Mucosa of descending colon (tissue), 3 donors: ENCODE measurements at regions of chr15 and their contacts with region 1.

Region 1: DNA sequence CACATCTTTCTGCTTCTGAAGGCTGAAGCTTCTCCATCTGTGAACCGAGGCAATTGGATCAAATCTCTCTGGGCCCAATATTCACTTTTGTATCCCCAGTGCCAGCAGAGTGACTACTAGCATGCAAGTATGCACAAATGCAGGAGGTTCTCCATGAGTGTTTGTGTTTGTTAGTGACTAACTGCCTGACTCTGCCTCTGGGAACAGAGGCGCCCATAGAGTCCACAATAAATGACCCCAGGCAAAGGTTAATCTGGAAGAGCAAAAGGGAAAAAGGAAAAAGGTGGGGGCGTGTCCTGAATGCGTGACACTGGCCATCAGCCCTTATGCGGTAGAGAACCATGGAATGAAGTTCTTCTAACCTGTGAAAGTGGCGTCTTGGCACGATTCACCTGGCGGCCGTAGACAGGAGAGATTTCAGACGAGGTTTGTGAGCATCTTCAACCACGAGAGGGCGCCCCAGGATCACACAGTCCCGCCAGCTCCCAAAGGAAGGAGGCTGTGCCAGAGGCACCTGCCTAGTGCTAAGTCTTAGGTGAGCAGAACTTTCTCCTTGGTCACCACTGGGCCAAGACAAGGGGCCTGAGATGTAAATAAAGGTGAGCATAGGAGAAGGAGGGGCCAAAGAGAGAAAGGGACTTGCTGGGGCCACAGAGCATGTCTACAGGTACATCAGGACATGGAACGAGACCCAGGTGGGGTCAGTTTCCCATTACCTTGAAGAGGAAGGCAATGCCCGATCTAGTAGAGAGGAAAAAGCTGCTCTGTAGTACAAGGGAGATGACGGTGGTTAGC is 44.2 kb downstream of the RBPMS2 start:
- DNase-seq: peak; percentile 82 to 96 (median 90)
- ATAC-seq: peak; percentile 95
- H3K4me3 ChIP-seq: no peak overlapping the region
- H3K4me1 ChIP-seq: no peaks in the 10 kb centered on the region
- CTCF ChIP-seq: peak; percentile 66

Region 2: DNA sequence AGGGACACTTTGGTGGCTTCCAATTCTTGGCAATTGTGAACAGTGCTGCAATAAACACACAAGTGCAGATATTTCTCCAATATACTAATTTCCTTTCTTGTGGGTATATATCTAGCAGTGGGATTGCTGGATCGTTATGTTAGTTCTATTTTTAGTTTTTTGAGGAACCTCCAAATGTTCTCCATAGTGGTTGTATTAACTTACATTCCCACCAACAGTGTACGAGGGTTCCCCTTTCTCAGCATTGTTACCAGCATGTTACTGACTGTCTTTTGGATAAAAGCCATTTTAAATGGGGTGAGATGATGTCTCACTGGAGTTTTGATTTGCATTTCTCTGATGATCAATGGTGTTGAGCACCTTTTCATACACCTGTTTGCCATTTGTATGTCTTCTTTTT is 777.7 kb before region 1 on chr15:
- intact Hi-C with region 1: no loop called
- DNase-seq: no peak
- ATAC-seq: no peak
- H3K4me3 ChIP-seq: no peak overlapping the region
- H3K4me1 ChIP-seq: peaks cover 2% of the 10 kb centered on the region
- CTCF ChIP-seq: no peak

Region 3: DNA sequence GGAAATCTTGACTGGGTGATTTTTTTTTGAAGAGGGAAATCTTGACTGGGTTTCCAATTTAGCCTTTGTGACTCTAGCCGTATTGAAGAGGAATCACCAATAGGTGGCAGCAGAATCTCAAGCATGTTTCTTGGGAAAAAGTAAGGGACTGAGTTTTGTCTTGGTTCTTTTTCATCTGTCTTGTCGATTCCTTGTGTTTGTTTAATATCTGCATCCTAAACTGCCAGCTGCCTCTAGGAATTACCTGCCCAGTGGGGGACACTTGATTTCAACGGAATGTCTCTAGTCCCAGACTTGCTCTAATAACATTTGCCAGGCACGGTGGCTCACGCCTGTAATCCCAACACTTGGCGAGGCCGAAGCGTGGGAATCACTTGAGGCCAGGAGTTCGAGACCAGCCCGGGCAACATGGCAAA is 45.0 kb before region 1 on chr15:
- intact Hi-C with region 1: loop called (anchors 5 kb)
- DNase-seq: peak in 1 of 3 donors; percentile 64
- ATAC-seq: peak; percentile 41
- H3K4me3 ChIP-seq: no peak overlapping the region
- H3K4me1 ChIP-seq: no peaks in the 10 kb centered on the region
- CTCF ChIP-seq: peak; percentile 21

Region 4: DNA sequence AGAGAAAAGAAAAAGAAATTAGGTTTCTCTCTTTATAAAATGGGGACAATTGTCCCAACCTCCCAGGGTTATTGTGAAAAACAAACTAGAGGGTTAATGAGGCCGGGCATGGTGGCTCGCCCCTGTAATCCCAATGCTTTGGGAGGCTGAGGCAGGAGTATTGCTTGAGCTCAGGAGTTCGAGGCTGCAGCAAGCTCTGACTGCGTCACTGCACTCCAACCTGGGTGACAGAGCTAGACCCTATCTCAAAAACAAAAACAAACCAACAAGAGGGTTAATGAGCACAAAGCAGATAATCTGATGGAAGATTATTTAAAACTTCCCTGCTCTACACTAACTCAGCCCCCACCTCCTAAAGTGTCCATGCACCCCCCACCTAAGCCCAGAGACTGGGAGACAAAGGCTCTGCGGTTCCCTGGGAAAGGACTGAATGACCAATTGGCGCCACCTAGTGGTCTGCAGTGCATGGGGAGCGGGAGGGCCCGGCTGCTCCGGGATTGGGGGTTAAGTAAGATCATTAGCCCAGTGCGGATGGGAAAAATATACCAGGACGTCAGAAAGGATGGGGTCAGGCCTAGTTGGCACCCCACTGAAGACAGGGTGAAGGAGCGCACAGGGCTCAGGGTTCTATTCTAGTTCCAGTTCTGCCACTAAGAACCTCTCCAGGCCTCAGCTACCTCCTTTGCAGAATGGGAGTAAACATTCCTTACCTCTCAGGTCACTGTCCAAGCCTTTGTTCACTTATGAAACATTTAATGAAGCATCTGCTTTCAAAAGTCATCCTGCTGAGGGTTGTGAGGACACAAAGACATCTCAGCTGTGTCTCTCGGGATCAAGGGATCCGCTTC is 78.7 kb after region 1 on chr15:
- intact Hi-C with region 1: loop called in 1 of 2 experiments (anchors 5 kb)
- DNase-seq: peak; percentile 65 to 90 (median 79)
- ATAC-seq: peak; percentile 85
- H3K4me3 ChIP-seq: no peak overlapping the region
- H3K4me1 ChIP-seq: no peaks in the 10 kb centered on the region
- CTCF ChIP-seq: peak; percentile 74

Region 5: GRCh38 chr15:64905119-64905831 is 174.1 kb after region 1 on chr15:
- intact Hi-C with region 1: loop called (anchors 10 kb)
- DNase-seq: peak; percentile 78 to 81 (median 81)
- ATAC-seq: peak; percentile 84
- H3K4me3 ChIP-seq: no peak overlapping the region
- H3K4me1 ChIP-seq: peaks cover 3% of the 10 kb centered on the region
- CTCF ChIP-seq: peak; percentile 67